ENCODE measurements at regions of chr12 and their contacts with region 1.

Region 1: DNA sequence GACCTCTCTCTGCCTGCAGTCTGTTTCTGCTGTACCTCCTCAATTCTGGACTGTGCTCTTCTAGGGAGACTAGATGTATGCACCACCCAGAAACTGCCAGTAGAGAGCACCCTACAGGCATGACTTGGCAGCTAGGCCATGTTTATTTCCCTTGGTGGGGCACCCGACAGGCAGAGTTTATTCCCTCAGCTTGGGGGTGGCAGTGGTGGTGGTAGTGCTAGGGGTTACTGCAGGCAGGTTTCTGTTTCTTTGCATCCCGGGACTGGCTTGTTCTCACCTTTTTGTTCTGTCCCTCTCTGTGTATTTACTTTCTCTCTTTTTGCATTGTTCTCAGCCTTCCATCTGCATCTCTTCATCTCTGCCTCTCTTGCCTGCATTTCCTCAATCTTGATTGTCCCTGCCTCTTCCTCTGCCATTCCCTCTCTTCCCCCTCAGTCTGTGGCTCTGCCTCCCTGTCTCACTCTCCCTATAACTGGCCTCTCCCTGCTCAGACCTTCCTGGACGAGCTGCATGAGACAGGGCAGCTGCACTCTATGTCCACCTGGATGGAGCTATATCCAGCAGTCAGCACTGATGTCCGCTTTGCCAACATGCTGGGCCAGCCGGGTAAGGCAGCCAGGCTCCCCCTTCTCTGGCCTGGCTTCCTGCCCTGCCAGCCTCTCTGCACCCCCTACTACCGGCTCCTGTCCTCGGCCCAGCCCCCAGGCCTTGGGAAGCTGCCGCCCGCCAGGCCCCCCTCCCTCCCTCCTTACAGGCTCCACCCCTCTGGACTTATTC is 13.8 kb downstream of the PRPF40B start:
- DNase-seq: peak; percentile 84
- H3K4me3 ChIP-seq: no peak overlapping the region
- H3K27ac ChIP-seq: no peak overlapping the region
- H3K4me1 ChIP-seq: peaks cover 14% of the 10 kb centered on the region
- CTCF ChIP-seq: peak; percentile 85

Region 2: DNA sequence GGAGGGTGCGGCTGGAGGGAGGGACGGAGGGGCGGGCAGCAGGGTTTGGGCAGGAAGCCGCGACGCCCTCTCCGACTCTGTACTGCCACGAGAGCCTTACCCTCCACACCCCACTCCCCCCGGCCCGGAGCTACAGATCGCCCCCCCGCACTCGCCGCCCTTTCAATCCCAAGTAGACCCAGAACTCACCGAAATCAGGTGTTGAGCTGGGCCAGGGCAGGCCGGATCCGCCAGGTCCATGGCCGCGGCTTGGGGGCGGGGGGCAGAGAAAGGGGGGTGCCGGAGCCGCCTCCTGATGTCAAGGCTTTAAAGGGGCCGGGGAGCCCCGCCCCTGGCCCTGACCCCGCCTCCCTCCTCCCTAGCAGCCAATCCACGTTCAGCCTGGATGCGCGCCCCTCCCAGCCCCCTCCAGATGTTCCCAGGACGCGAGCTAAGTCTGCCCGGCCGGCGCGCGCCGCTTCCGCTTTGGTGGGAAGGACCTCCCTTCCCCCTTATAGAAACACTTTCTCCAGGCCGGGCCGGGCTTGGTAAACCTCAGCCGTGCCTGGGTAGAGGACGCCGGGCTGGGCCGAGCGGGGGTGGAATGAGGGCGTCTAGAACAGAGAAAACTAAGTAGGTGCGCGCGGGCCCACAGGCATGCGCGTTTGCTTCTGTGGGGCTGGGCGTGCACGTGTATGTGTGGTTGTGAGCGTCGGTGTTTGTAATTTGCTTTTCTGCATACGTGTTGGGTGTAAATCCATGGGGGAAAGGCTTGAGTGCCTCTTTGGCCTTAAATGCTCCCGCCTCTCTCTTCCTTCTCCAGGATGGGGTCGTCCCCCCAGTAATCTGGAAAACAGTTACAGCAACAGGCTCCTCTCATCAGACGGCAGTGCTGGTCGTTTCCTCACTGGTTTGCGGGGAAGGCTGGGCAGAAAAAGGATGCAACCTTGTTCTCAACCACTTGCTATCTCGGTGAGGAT is 191.2 kb after region 1 on chr12 and contains the start of gene NCKAP5L:
- CTCF ChIA-PET with region 1: no interaction called
- POLR2A ChIA-PET with region 1: interaction called, 5 read pairs
- intact Hi-C with region 1: loop called (anchors 5 kb)
- DNase-seq: peak; percentile 94
- H3K4me3 ChIP-seq: peak within 1 kb of the TSS; percentile 72
- H3K27ac ChIP-seq: peak within 1 kb of the TSS; percentile 35
- H3K4me1 ChIP-seq: peaks cover 15% of the 10 kb centered on the region
- CTCF ChIP-seq: no peak
- total RNA-seq, gene NCKAP5L: 4.6 TPM in 2 replicates

Region 3: GRCh38 chr12:50314629-50315312 is 677.6 kb after region 1 on chr12:
- CTCF ChIA-PET with region 1: no interaction called
- POLR2A ChIA-PET with region 1: no interaction called
- intact Hi-C with region 1: no loop called
- DNase-seq: peak; percentile 50
- H3K4me3 ChIP-seq: no peak overlapping the region
- H3K27ac ChIP-seq: no peak overlapping the region
- H3K4me1 ChIP-seq: no peaks in the 10 kb centered on the region
- CTCF ChIP-seq: peak; percentile 85